Head of caudate nucleus (tissue), 42 donors: ENCODE measurements at regions of chr3 and their contacts with region 1.

Region 1: DNA sequence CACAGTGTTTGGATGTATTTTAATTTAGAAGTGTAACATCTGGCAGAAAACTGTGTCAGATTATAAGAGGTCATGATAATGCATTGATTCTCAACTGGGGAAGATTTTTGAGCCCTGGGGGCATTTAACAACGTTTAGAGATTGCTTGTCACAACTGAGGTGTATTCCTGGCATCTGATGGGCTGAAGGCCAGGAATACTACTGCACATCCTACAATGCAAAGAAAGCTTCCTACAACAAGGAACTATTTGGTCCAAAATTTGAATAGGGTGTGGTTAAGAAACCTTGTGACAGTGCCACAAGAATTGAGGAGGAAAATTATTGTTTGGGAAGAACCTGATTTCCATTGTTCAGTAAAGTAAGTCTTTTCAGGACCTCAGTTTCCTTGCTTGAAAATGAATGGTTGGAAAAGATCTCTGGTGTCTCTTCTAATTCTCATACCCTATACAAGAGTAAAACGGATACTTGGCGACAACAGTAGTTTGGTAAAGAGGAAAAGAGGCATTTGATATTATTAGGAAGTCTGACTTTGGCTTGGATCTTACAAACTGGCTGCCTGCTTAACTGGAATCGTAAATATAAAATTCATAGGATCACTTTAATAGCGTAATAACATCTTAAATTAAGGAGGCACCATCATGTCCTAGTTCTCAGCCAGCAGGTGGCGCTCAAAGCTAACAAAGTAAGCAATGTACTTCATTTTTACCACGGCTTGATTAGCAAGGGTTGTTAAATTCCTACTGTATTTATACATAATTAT is 4.3 kb downstream of the DAZL start:
- DNase-seq: peak; percentile 70 to 96 (median 89)

Region 2: DNA sequence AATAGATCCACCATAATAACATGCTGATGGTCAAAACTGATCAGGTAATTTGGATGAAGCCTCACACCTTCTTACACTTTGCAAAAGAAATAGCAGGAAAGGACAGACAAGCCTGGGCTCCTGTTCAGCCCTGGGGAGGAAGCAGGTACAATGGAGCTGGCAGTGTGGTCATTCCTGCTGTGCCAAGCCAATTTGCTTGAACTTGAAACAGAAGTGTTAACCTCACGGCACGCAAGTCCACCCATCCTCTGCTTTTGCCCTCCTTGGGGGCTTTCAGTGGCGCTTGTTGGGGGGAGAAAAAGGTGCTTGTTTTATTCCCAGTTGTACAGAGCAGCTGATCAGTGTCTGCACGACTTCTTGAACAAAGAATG is 50.7 kb before region 1 on chr3:
- intact Hi-C with region 1: no loop called
- DNase-seq: peak in 1 of 42 donors; percentile 3

Region 3: DNA sequence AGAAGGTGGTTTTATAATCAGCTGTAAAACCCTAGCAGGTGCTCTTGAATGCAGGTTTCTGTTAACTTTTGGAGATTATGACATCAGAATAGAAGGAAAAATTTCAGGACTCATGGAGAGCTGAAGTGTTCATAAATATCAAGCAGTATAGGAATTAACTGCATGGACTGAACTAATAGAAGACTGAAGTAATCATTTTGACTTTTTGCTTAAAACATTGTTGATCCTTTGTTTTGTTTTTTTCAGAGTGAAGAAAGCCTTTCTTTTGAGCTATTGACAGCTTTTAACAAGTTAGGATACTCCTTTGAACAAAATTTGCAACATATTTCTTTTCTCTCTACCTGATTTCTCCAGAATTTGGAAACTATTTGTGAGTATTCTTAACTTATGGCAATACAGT is 74.8 kb after region 1 on chr3:
- intact Hi-C with region 1: no loop called
- DNase-seq: no peak

Region 4: GRCh38 chr3:17032407-17033034 is 431.6 kb after region 1 on chr3:
- intact Hi-C with region 1: loop called (anchors 10 kb)
- DNase-seq: peak in 7 of 42 donors; percentile 23 to 60 (median 35)

Region 5: DNA sequence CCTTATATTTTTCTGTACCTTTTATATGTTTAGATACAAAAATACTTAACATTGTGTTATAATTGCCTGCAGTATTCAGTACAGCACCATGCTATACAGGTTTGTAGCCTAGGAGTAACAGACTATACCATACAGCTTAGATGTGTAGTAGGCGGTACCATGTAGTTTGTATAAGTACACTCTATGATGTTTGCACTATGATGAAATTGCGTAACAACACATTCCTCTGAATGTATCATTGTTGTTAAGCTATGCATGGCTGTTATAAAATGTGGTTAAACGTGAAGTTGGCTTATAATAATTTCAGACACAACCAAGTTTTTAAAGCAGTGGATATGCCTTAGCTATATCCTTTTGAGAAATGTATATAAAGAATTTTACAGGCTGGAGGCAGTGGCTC is 612.1 kb after region 1 on chr3:
- intact Hi-C with region 1: loop called (anchors 10 kb)
- DNase-seq: no peak